ENCODE measurements at regions of chr1 and their contacts with region 1.

Region 1: GRCh38 chr1:11012250-11013171 is at the start of gene TARDBP:
- DNase-seq: peak; percentile 91
- H3K4me3 ChIP-seq: peak within 1 kb of the TSS; percentile 62 to 95 (median 95)
- H3K27ac ChIP-seq: peak within 1 kb of the TSS; percentile 100
- H3K4me1 ChIP-seq: peaks cover 20% of the 10 kb centered on the region
- H3K27me3 ChIP-seq: no peaks in the 10 kb centered on the region
- CTCF ChIP-seq: no peak
- POLR2A ChIP-seq: peak; percentile 83
- total RNA-seq, gene TARDBP: 171 and 183 TPM in 2 replicates

Region 2: GRCh38 chr1:10765734-10766478 is 246.6 kb before region 1 on chr1:
- CTCF ChIA-PET with region 1: no interaction called
- POLR2A ChIA-PET with region 1: no interaction called
- dilution Hi-C with region 1: no loop called
- intact Hi-C with region 1: no loop called
- DNase-seq: no peak
- H3K4me3 ChIP-seq: no peak overlapping the region
- H3K27ac ChIP-seq: no peak overlapping the region
- H3K4me1 ChIP-seq: no peaks in the 10 kb centered on the region
- H3K27me3 ChIP-seq: no peaks in the 10 kb centered on the region
- CTCF ChIP-seq: no peak
- POLR2A ChIP-seq: no peak

Region 3: DNA sequence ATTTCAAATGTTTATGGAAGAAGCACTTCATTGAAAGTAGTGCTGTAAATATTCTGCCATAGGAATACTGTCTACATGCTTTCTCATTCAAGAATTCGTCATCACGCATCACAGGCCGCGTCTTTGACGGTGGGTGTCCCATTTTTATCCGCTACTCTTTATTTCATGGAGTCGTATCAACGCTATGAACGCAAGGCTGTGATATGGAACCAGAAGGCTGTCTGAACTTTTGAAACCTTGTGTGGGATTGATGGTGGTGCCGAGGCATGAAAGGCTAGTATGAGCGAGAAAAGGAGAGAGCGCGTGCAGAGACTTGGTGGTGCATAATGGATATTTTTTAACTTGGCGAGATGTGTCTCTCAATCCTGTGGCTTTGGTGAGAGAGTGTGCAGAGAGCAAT is 10.7 kb after region 1 on chr1:
- CTCF ChIA-PET with region 1: no interaction called
- POLR2A ChIA-PET with region 1: no interaction called
- dilution Hi-C with region 1: no loop called
- intact Hi-C with region 1: no loop called
- DNase-seq: no peak
- H3K4me3 ChIP-seq: no peak overlapping the region
- H3K27ac ChIP-seq: no peak overlapping the region
- H3K4me1 ChIP-seq: no peaks in the 10 kb centered on the region
- H3K27me3 ChIP-seq: no peaks in the 10 kb centered on the region
- CTCF ChIP-seq: no peak
- POLR2A ChIP-seq: no peak

Region 4: DNA sequence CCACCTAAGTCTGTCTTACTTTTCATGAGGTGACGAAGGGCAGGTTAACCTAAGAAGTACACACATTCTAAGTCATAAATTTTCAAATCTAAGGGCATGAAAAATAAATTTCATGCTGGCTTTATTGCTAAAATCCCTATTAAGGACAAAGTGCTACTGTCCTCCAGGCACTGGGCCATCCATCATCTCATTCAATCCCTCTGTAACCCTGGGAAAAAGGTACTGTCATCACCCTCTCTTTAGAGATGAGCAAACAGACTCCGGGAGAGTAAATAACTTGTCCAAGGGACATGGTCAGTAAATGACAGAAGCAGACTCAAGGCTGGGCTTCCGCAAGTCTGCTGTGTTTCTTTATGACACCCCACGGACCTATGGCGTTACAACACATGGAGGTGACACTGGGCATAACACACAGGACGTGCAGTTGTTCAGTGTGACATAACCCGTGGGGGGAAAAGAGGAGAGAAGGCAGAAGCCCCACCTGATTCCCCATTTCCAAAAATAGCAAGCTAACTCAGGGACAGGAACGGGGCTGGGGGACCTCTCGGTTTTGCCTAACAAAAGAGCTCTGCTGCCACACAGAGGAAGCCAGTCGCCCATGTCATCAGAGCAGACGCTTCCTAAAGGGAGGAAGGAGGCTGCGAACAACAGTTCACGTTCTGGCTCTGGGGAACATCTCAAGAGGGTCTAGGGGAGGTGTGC is 59.9 kb after region 1 on chr1:
- CTCF ChIA-PET with region 1: no interaction called
- POLR2A ChIA-PET with region 1: no interaction called
- dilution Hi-C with region 1: no loop called
- intact Hi-C with region 1: no loop called
- DNase-seq: no peak
- H3K4me3 ChIP-seq: no peak overlapping the region
- H3K27ac ChIP-seq: no peak overlapping the region
- H3K4me1 ChIP-seq: no peaks in the 10 kb centered on the region
- H3K27me3 ChIP-seq: no peaks in the 10 kb centered on the region
- CTCF ChIP-seq: no peak
- POLR2A ChIP-seq: no peak

Region 5: GRCh38 chr1:11099310-11100149 is 87.0 kb after region 1 on chr1 and contains the start of gene EXOSC10:
- CTCF ChIA-PET with region 1: no interaction called
- POLR2A ChIA-PET with region 1: interaction called, 3 read pairs
- dilution Hi-C with region 1: no loop called
- intact Hi-C with region 1: loop called (anchors 2 kb)
- DNase-seq: peak; percentile 88
- H3K4me3 ChIP-seq: peak within 1 kb of the TSS; percentile 49 to 100 (median 99)
- H3K27ac ChIP-seq: peak within 1 kb of the TSS; percentile 84
- H3K4me1 ChIP-seq: peaks cover 12% of the 10 kb centered on the region
- H3K27me3 ChIP-seq: no peaks in the 10 kb centered on the region
- CTCF ChIP-seq: no peak
- POLR2A ChIP-seq: peak; percentile 47
- total RNA-seq, gene EXOSC10: 103 and 104 TPM in 2 replicates

Region 6: DNA sequence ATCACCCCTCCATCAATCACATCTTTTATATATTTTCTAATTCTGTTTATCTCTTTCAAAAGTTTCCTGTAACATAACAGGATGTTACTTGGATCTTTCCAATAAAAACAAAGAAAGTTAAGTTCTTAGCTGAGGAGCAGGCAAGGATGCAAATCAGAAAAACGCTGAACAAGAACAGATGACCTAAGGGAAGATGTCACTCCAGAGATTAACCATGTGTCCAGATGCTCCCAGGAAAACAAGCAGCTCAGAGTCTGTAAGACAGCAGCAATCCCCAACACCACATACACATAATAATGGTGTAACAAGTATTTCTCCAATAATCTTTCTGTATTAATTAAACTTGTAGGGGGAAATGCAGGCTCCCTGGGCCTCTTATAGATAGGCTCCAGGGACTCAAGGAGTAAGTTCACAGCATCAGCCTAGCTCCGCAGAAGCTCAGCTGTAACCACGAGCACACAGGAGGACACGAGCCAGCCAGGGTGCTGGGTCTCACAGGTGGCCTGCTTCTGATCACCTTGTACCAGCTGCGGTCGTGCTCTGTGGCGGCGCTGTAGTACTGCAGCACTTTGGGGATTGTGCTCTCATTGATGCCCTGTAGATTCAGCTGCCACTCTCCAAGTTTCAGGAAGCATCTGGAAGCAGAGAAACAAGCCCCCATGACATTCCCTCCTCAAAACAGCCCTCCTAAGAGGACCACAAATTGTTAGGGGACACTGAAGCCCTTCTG is 120.2 kb after region 1 on chr1:
- CTCF ChIA-PET with region 1: no interaction called
- POLR2A ChIA-PET with region 1: interaction called, 11 read pairs
- dilution Hi-C with region 1: no loop called
- intact Hi-C with region 1: no loop called
- DNase-seq: no peak
- H3K4me3 ChIP-seq: no peak overlapping the region
- H3K27ac ChIP-seq: no peak overlapping the region
- H3K4me1 ChIP-seq: peaks cover 8% of the 10 kb centered on the region
- H3K27me3 ChIP-seq: no peaks in the 10 kb centered on the region
- CTCF ChIP-seq: no peak
- POLR2A ChIP-seq: no peak

Measured in endothelial cell of umbilical vein (primary cell).